ENCODE measurements at regions of chr15 and their contacts with region 1.

Region 1: GRCh38 chr15:88246666-88247446 is 9.7 kb downstream of the NTRK3 start:
- DNase-seq: peak; percentile 82
- ATAC-seq: peak; percentile 75 to 87

Region 2: DNA sequence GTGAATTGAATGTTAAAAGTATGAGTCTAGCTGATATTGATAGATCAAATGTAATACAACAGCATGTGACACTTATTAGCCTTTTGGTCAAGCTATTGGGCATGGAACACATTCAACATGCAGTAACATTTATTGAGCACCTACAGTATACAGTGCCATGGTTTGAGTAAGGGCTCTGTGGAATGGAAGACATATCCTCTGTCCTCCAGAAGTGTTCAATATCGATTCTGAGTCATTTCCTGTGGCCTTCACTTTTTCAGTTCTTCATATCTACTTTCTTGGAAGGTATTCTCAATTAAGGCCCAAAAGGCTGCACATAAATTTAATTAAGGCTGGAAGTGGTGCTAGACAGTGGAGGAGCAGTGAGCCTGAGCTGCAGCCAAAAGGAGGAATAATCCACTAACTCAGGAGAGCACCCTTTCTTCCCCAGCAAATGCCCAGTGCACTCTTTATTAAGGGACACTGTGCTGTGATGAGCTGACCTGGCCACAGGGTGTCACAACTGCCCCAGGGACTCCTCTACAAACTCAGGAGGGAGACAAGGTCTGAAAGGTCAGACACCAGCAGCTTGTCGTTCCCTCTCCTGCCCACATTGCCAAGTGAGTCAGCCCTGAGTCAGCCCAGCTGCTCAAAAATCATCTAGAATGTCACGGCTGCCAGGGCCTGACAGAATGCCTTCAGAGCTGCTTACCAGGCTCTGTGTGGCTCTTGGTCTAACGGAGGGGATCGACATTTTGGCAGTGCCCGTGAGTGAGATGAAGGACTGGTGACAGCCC is 1622.4 kb before region 1 on chr15:
- intact Hi-C with region 1: loop called in 1 of 2 experiments (anchors 10 kb)
- DNase-seq: peak; percentile 83
- ATAC-seq: peak; percentile 98 to 99

Region 3: GRCh38 chr15:86915811-86916331 is 1331.0 kb before region 1 on chr15:
- intact Hi-C with region 1: loop called in 1 of 2 experiments (anchors 5 kb)
- DNase-seq: no peak
- ATAC-seq: peak; percentile 67 to 85

Region 4: DNA sequence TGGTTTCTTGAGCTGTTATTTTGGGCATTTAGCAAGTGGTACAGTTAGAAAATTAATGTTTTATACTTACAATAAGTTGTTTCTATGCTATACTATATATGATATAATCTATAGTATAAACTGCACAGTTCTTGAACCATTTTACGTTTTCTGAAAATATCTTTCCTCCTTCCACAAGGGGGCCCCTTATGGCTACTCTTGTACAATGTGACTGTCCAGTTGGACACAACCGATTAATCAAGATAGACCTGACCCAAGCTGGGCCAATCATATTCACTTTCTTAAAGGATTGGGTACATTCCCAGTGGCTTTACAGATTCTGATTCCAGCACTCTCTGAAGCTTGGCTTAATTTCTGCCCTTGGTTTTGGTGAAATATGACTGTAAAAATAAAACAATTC is 1213.8 kb before region 1 on chr15:
- intact Hi-C with region 1: loop called in 1 of 2 experiments (anchors 10 kb)
- DNase-seq: no peak
- ATAC-seq: no peak

Region 5: GRCh38 chr15:87619161-87619960 is 627.5 kb before region 1 on chr15:
- intact Hi-C with region 1: no loop called
- DNase-seq: no peak
- ATAC-seq: peak; percentile 87

Region 6: DNA sequence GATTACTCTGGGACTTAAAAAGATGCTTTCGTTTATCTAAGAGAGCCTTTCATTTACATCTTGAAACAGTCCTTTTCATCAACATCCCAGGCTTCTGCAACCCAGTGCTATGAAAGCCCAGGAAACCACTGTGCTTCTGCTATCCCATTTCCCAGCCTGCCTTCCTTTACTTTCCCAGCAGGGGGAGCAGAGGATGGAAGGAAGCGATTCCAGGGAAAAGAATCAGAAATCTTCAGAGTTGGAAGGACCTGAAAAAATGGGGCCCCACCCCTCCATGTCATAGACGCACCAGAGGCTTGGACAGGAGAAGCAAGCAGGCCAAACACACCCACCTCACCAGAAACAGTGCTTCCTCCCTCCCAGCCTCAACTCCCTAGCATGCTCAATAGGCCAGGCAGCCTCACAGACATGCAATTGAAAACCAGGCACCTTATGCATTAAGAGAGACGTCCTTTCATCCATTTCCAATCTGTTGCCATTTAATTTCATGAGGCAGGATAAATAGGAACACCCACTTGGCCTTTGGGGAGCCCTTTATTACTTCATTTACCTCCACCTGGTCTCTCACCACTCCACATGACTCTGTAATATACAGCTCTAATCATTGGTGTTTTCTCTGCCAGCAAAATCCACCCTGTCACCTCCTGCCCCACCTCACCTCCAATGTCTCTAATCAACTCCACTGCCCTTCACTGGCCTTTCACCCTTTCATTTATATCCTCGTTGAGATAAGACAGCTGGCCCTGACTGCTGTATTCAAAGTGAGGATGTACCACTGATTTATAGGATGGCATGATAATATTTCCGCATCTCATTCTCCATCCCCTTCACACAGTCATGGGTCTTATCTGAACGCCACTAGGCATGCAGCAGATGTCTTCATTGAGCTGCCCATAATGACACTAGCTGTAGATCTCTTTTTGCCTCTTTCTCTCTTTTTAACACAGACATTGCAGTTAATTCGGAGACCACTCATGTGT is 574.3 kb before region 1 on chr15:
- intact Hi-C with region 1: loop called (anchors 5 to 10 kb)
- DNase-seq: peak; percentile 23
- ATAC-seq: peak; percentile 8 to 33

Region 7: GRCh38 chr15:88375234-88375927 is 128.5 kb after region 1 on chr15:
- intact Hi-C with region 1: no loop called
- DNase-seq: no peak
- ATAC-seq: peak in 1 of 2 donors; percentile 91

Measured in left cardiac atrium (tissue), 4 donors.